B cell (primary cell): ENCODE measurements at regions of chr15 and their contacts with region 1.

Region 1: DNA sequence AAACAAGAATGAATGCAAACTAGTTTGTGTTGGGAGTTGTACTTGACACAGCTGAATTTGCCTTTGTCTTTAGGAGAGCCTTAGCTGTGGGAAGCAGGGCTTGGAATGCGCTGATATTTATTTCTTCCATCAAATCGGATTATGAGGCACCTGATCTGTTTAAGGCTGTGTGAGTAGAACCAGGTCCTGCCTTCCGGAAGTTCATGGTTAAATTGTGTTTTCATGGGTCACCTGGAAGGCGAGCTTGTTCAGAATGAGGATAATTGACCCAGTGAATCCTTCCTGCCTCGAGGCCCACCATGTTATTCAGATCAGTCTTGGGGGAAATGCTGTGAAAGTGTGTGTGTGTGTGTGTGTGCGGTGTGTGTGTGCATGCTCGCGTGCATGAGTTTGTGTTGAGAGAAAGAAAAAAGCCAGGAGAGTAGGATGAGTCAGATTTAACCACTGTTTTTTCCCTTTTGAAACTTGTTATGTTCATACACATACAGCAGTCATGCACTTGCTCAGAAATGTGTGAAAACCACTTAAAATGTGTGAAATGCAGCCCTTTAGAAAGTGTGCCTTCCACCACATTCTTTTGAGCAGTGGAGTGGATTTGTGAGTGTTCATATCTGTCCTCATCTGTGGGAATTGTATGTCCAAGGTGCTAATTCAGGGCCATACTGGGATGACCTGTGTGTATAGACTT is 36.7 kb downstream of the SMAD3 start:
- DNase-seq: peak; percentile 50
- ATAC-seq: peak; percentile 47
- H3K4me3 ChIP-seq: peak overlapping the region in 2 of 5 experiments; percentile 21 to 55
- H3K4me3 Mint-ChIP-seq: no peak overlapping the region
- H3K27ac ChIP-seq: peak overlapping the region; percentile 97 to 98
- H3K27ac Mint-ChIP-seq: no peak overlapping the region
- H3K4me1 ChIP-seq: peaks cover 98 to 100% of the 10 kb centered on the region in 2 donors
- H3K4me1 Mint-ChIP-seq: peaks cover 29% of the 10 kb centered on the region
- H3K27me3 ChIP-seq: no peaks in the 10 kb centered on the region
- H3K27me3 Mint-ChIP-seq: no peaks in the 10 kb centered on the region
- CTCF ChIP-seq: no peak

Region 2: DNA sequence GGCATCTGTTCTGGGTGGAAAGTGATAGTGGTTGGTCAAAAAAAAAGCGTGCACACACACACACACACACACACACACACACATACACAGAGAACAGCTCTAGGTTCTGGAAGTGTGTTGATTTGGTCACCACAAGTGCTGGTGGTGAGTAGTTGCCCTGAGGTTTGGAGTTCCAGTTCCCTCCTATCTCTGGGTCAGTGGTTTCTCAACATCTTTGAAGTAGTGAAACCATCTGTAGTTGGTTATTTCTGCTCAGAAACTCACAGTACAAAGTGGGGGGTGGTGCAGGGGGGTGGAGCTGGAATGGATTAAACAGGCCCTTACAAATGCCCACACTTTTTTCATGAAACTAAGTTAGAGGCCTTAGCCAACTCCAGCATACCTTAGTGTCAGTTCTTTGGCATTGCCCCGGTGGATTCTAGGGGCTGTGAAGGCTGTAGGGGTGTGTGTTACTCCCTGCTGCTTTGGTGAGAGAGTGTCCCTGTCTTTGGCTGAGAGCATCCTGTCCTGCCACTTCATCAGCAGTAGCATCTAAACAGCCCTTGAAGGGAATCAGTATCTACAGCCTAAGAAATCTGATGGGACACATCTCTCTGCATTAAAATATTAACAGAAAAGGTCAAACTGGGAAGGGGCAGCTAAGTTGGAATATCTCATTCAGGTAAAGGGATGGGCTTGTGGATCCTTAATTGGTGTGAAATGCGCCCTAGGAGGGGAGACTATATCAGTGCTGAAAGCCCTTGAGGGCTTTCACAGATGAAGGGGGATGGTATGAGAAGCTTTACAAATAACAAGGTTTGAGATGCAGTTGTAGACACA is 16.0 kb before region 1 on chr15:
- CTCF ChIA-PET with region 1: interaction called, 109 read pairs
- POLR2A ChIA-PET with region 1: interaction called, 10 read pairs
- intact Hi-C with region 1: loop called (anchors 1 kb)
- DNase-seq: peak; percentile 82
- ATAC-seq: peak; percentile 44
- H3K4me3 ChIP-seq: peak overlapping the region in 2 of 5 experiments; percentile 4 to 46
- H3K4me3 Mint-ChIP-seq: peak overlapping the region; percentile 87
- H3K27ac ChIP-seq: peak overlapping the region; percentile 88 to 97
- H3K27ac Mint-ChIP-seq: peak overlapping the region; percentile 97
- H3K4me1 ChIP-seq: peaks cover 95 to 99% of the 10 kb centered on the region in 2 donors
- H3K4me1 Mint-ChIP-seq: peaks cover 98% of the 10 kb centered on the region
- H3K27me3 ChIP-seq: no peaks in the 10 kb centered on the region
- H3K27me3 Mint-ChIP-seq: no peaks in the 10 kb centered on the region
- CTCF ChIP-seq: no peak

Region 3: GRCh38 chr15:67091071-67091979 is 10.7 kb before region 1 on chr15:
- CTCF ChIA-PET with region 1: interaction called, 109 read pairs
- POLR2A ChIA-PET with region 1: interaction called, 14 read pairs
- intact Hi-C with region 1: loop called (anchors 1 kb)
- DNase-seq: peak; percentile 71
- ATAC-seq: peak; percentile 44
- H3K4me3 ChIP-seq: peak overlapping the region in 1 of 5 experiments; percentile 10
- H3K4me3 Mint-ChIP-seq: peak overlapping the region; percentile 79
- H3K27ac ChIP-seq: peak overlapping the region; percentile 88 to 90
- H3K27ac Mint-ChIP-seq: peak overlapping the region; percentile 97
- H3K4me1 ChIP-seq: peaks cover 97 to 98% of the 10 kb centered on the region in 2 donors
- H3K4me1 Mint-ChIP-seq: peaks cover 97% of the 10 kb centered on the region
- H3K27me3 ChIP-seq: no peaks in the 10 kb centered on the region
- H3K27me3 Mint-ChIP-seq: no peaks in the 10 kb centered on the region
- CTCF ChIP-seq: no peak

Region 4: DNA sequence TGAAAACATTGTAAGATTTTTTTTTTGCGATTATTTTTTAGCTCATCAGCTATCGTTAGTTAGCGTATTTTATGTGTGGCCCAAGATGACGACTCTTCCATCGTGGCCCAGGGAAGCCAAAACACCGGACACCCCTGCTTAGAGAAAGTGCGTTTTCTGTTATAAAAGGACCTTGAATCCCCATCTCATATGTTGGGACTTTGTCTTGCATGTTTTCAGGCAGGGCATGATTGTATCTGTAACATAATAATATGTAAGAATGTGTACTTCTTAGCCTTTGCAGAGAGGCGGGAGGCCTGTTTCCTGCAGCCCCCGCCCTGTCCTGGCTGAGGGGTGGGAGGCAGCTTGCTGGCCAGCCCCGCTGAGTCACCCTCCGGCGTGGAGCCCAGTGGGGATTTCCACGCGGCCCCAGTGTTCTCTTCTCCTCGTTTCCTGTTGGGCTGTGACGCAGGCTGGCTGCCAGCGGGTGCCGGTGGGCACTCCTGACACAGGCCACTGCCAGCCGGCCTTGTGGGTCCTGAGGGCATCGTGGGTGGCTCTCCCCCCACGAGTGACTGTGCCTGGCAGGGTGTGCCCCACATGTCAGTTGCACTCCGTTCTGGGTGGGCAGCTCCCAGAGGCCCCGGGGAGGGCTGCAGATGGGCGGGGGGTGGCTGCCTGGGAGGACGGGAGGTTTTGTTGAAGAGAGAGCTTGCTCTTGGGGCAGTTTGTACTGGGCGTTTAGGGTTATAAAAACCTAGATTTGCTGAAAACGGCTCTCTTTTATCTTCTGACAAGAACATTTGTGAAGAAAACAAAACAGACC is 19.0 kb after region 1 on chr15:
- CTCF ChIA-PET with region 1: interaction called, 9 read pairs
- POLR2A ChIA-PET with region 1: interaction called, 40 read pairs
- intact Hi-C with region 1: loop called (anchors 1 kb)
- DNase-seq: peak; percentile 94
- ATAC-seq: peak; percentile 89
- H3K4me3 ChIP-seq: peak overlapping the region; percentile 9 to 54 (median 24)
- H3K4me3 Mint-ChIP-seq: peak overlapping the region; percentile 82
- H3K27ac ChIP-seq: peak overlapping the region; percentile 90 to 91
- H3K27ac Mint-ChIP-seq: peak overlapping the region; percentile 96
- H3K4me1 ChIP-seq: peaks cover 83 to 93% of the 10 kb centered on the region in 2 donors
- H3K4me1 Mint-ChIP-seq: peaks cover 91% of the 10 kb centered on the region
- H3K27me3 ChIP-seq: no peaks in the 10 kb centered on the region
- H3K27me3 Mint-ChIP-seq: no peaks in the 10 kb centered on the region
- CTCF ChIP-seq: no peak

Region 5: GRCh38 chr15:67690936-67691335 is 588.9 kb after region 1 on chr15:
- CTCF ChIA-PET with region 1: no interaction called
- POLR2A ChIA-PET with region 1: no interaction called
- intact Hi-C with region 1: no loop called
- DNase-seq: no peak
- ATAC-seq: no peak
- H3K4me3 ChIP-seq: no peak overlapping the region
- H3K4me3 Mint-ChIP-seq: no peak overlapping the region
- H3K27ac ChIP-seq: no peak overlapping the region
- H3K27ac Mint-ChIP-seq: no peak overlapping the region
- H3K4me1 ChIP-seq: no peaks in the 10 kb centered on the region
- H3K4me1 Mint-ChIP-seq: no peaks in the 10 kb centered on the region
- H3K27me3 ChIP-seq: no peaks in the 10 kb centered on the region
- H3K27me3 Mint-ChIP-seq: no peaks in the 10 kb centered on the region
- CTCF ChIP-seq: no peak